RWPE1 (cell line): ENCODE measurements at regions of chr17 and their contacts with region 1.

Region 1: DNA sequence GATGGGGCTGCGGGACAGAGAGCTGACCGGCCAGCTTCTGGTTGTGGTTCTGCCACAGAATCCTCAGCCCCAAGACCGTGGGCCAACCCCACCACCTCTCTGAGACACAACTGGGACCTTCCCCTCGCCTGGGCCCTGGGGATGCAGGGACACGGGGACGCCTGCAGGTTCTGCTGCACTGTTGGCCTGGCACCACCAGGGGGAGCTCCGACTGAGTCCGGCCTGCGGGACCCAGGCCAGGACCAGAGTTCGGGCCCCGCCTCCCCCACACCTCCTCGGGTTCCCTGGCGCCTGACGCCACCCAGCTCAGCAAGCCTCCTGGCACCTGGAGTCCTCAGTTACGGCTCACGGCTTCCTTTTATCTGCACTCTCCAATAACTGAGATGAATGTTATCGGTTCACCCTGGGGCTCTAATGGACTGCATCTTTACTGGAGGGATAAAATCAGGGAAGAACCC is 27.3 kb downstream of the TBC1D16 start:
- DNase-seq: peak; percentile 70
- H3K27ac ChIP-seq: no peak overlapping the region; the same call in 1 of the 2 replicates
- CTCF ChIP-seq: peak; percentile 97

Region 2: GRCh38 chr17:79970576-79971068 is 37.8 kb before region 1 on chr17:
- CTCF ChIA-PET with region 1: no interaction called
- POLR2A ChIA-PET with region 1: no interaction called
- DNase-seq: no peak
- H3K27ac ChIP-seq: no peak overlapping the region
- CTCF ChIP-seq: peak; percentile 11; the same call in 1 of the 2 replicates

Region 3: DNA sequence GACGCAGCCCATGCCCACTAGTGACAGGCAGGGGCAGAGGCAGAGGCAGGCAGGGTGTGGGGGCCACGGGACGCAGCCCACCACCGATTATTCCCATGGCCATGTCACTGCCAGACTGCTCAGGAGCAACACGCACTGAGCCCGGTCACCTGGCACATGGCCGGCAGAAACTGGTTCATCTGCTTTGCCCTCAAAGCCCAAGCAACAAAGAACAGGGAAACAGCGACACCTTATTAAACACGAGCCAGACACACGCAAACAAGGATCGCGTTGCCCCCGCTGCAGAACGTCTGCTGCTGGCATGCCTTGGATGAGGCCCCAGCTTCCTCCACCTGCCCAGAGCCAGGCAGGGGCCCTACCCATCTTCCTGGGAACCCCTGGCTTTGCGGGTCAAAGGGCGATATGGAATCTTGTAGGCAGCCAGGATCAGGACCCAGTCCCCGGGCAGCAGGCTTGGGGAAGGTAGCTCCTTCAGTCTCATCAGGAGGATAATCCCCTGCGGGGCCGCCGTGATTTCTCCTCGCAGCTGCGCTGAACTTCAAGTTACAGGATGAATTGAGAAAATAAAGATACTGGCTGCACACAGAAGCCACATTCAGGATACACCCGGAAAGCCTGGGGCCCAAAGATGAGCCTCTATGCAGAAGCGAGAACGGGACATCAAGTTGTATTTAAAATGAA is 22.5 kb after region 1 on chr17:
- CTCF ChIA-PET with region 1: interaction called, 12 read pairs
- POLR2A ChIA-PET with region 1: no interaction called
- DNase-seq: no peak
- H3K27ac ChIP-seq: peak overlapping the region; percentile 9; the same call in 1 of the 2 replicates
- CTCF ChIP-seq: no peak

Region 4: GRCh38 chr17:80082403-80083135 is 74.2 kb after region 1 on chr17:
- CTCF ChIA-PET with region 1: interaction called, 14 read pairs
- POLR2A ChIA-PET with region 1: no interaction called
- DNase-seq: peak; percentile 63
- H3K27ac ChIP-seq: no peak overlapping the region
- CTCF ChIP-seq: peak; percentile 91